ENCODE measurements at regions of chr4 and their contacts with region 1.

Region 1: GRCh38 chr4:166045457-166045856 is 172.4 kb downstream of the TLL1 start:
- DNase-seq: no peak

Region 2: GRCh38 chr4:165905405-165906027 is 139.9 kb before region 1 on chr4:
- intact Hi-C with region 1: no loop called
- DNase-seq: no peak

Region 3: DNA sequence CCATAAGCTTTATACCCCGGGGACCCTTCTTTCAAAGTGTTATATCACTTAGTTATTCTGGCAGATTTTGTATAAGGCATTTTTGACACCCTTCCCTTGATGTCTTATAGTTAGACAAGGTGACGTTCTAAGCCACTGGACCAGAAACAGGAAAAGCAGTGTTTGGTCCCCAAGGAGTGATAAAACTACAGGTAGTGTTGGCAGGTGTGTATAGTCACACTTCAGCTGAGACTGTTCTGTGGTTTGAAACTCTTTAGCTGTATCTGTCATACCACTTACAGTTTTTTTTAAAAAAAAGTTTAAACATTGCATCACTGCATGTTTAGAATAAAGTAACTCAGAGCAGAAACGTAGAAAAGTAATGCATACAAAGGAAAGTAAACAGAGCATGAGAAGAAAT is 123.9 kb before region 1 on chr4:
- intact Hi-C with region 1: loop called (anchors 10 kb)
- DNase-seq: no peak

Region 4: GRCh38 chr4:166017804-166018203 is 27.7 kb before region 1 on chr4:
- intact Hi-C with region 1: no loop called
- DNase-seq: no peak

Region 5: GRCh38 chr4:166165829-166166420 is 120.5 kb after region 1 on chr4:
- intact Hi-C with region 1: no loop called
- DNase-seq: no peak

Measured in cardiac septum (tissue), 1 donor.